ENCODE measurements at regions of chr5 and their contacts with region 1.

Region 1: DNA sequence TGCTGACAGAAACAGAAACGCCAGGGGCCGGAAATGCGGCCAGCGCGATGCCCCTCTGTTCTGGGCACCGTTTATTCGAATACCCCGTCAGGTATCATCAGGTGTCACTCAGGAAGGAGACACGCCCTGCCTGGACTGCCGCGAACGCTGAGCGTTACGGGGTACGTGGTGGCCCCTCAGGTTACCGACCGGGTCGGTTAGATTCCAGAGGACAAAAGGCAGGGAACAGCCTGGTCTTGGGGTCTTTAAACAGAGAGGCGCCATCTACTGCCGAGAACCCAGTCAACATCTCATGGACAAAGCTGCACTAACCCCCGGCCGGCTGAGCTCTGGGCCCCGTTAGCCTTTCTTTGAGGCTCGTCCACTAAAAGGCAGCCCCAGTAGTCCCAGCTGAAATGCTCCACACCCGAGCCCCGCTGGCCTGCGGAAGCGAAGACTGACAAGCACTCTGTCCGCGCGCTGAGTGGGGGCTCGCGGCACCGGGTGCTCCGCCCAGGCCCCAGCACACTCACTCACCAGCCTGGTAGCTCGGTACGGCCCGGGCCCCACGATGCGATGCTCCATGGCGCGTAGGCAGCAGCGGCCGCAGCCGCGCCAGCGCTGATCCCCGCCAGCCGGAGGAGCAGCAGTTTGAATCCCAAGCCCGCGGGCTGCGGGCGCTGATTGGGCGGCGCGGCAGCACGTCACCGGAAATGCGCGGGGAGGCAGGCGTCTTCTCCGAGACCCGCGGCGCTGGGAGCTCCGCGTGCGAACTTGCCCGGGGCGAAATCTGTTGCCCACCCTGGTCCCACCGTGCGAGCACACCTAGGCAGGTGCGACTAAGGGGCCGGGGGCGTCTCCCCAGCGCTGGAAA is at the start of gene DEPDC1B:
- DNase-seq: peak; percentile 91
- ATAC-seq: peak; percentile 97
- H3K4me3 Mint-ChIP-seq: peak within 1 kb of the TSS; percentile 88
- H3K27ac Mint-ChIP-seq: peak within 1 kb of the TSS; percentile 90
- H3K4me1 Mint-ChIP-seq: peaks cover 31% of the 10 kb centered on the region
- H3K27me3 Mint-ChIP-seq: peaks cover 12% of the 10 kb centered on the region
- total RNA-seq, gene DEPDC1B: 35.3 to 38.7 TPM

Region 2: GRCh38 chr5:60668686-60669304 is 31.0 kb before region 1 on chr5:
- CTCF ChIA-PET with region 1: interaction called, 13 read pairs
- DNase-seq: no peak
- ATAC-seq: no peak
- H3K4me3 Mint-ChIP-seq: no peak overlapping the region
- H3K27ac Mint-ChIP-seq: no peak overlapping the region
- H3K4me1 Mint-ChIP-seq: no peaks in the 10 kb centered on the region
- H3K27me3 Mint-ChIP-seq: no peaks in the 10 kb centered on the region

Region 3: GRCh38 chr5:60677844-60678664 is 21.7 kb before region 1 on chr5:
- CTCF ChIA-PET with region 1: interaction called, 12 read pairs
- DNase-seq: no peak
- ATAC-seq: peak; percentile 27
- H3K4me3 Mint-ChIP-seq: no peak overlapping the region
- H3K27ac Mint-ChIP-seq: no peak overlapping the region
- H3K4me1 Mint-ChIP-seq: peaks cover 4% of the 10 kb centered on the region
- H3K27me3 Mint-ChIP-seq: no peaks in the 10 kb centered on the region

Region 4: GRCh38 chr5:60687927-60688720 is 11.6 kb before region 1 on chr5:
- CTCF ChIA-PET with region 1: interaction called, 34 read pairs
- DNase-seq: no peak
- ATAC-seq: peak; percentile 79
- H3K4me3 Mint-ChIP-seq: no peak overlapping the region
- H3K27ac Mint-ChIP-seq: no peak overlapping the region
- H3K4me1 Mint-ChIP-seq: no peaks in the 10 kb centered on the region
- H3K27me3 Mint-ChIP-seq: no peaks in the 10 kb centered on the region